Mammary epithelial cell (primary cell): ENCODE measurements at regions of chr5 and their contacts with region 1.

Region 1: DNA sequence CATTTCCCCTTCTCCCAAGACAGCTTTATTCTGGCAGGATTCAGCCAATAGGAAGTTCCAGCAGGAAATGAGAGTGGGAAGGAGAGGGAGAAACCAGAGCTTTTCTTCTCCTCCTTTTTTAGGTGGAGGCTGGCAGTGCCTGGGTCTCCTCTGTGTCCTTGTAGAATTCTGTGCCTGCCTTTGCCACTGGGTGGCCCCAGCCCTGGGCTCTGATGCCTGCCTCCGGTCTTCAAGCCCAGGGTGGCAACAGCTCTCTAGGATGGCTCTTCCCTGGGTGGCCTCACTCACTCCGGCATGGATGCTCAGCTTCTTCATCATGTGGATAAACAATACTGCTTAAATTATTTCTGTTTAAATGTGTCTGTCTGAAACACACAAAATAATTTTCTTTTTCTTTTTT is 694.8 kb downstream of the SEMA5A start:
- DNase-seq: no peak
- H3K4me3 ChIP-seq: no peak overlapping the region
- H3K27ac ChIP-seq: no peak overlapping the region
- H3K4me1 ChIP-seq: no peaks in the 10 kb centered on the region
- H3K27me3 ChIP-seq: no peaks in the 10 kb centered on the region
- CTCF ChIP-seq: no peak

Region 2: DNA sequence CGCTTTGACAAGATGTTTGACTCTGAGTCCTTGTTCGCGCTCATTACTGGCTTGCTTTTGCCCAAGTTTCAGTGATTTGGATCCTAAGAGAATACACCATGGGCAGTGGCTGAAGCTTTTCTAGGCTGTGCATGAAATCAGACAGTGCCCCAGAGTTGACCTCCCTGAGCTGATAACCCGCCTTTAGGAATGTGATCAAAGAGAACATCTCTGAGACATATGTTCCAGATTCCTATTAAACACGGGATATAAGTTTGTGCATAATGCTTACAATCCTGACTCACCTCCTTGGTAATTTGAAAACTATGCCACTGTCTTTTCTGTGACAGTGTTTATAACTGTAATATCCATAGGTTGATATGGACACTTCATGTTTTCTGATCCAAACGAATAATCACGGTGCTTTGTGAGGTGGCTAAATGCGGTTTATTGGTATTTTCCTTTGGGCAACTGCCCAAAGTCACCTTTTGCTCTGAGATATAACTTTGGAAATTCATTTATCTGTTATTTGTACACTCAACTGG is 249.2 kb before region 1 on chr5:
- CTCF ChIA-PET with region 1: no interaction called
- dilution Hi-C with region 1: no loop called
- in situ Hi-C with region 1: no loop called
- intact Hi-C with region 1: no loop called
- DNase-seq: no peak
- H3K4me3 ChIP-seq: no peak overlapping the region
- H3K27ac ChIP-seq: no peak overlapping the region
- H3K4me1 ChIP-seq: no peaks in the 10 kb centered on the region
- H3K27me3 ChIP-seq: no peaks in the 10 kb centered on the region
- CTCF ChIP-seq: no peak

Region 3: GRCh38 chr5:8773046-8773615 is 78.0 kb before region 1 on chr5:
- CTCF ChIA-PET with region 1: no interaction called
- dilution Hi-C with region 1: no loop called
- in situ Hi-C with region 1: no loop called
- intact Hi-C with region 1: no loop called
- DNase-seq: peak; percentile 49
- H3K4me3 ChIP-seq: no peak overlapping the region
- H3K27ac ChIP-seq: no peak overlapping the region
- H3K4me1 ChIP-seq: peaks cover 10% of the 10 kb centered on the region
- H3K27me3 ChIP-seq: no peaks in the 10 kb centered on the region
- CTCF ChIP-seq: no peak

Region 4: GRCh38 chr5:8870959-8871355 is 19.9 kb after region 1 on chr5:
- CTCF ChIA-PET with region 1: interaction called, 11 read pairs
- dilution Hi-C with region 1: no loop called
- in situ Hi-C with region 1: no loop called
- intact Hi-C with region 1: no loop called
- DNase-seq: no peak
- H3K4me3 ChIP-seq: no peak overlapping the region
- H3K27ac ChIP-seq: no peak overlapping the region
- H3K4me1 ChIP-seq: no peaks in the 10 kb centered on the region
- H3K27me3 ChIP-seq: no peaks in the 10 kb centered on the region
- CTCF ChIP-seq: no peak

Region 5: DNA sequence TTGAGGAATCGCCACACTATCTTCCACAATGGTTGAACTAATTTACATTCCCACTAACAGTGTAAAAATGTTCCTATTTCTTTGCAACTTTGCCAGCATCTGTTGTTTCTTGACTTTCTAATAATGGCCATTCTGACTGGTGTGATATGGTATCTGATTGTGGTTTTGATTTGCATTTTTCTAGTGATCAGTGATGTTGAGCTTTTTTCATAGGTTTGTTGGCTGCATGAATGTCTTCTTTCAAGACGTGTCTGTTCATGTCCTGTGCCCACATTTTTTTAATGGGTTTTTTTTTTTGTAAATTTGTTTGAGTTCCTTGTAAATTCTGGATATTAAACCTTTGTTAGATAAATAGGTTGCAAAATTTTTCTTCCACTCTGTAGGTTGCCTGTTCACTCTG is 78.9 kb after region 1 on chr5:
- CTCF ChIA-PET with region 1: no interaction called
- dilution Hi-C with region 1: no loop called
- in situ Hi-C with region 1: no loop called
- intact Hi-C with region 1: no loop called
- DNase-seq: peak; percentile 53
- H3K4me3 ChIP-seq: no peak overlapping the region
- H3K27ac ChIP-seq: no peak overlapping the region
- H3K4me1 ChIP-seq: no peaks in the 10 kb centered on the region
- H3K27me3 ChIP-seq: no peaks in the 10 kb centered on the region
- CTCF ChIP-seq: no peak